Activated naive CD4-positive, alpha-beta T cell treated with anti-CD3 and anti-CD28 coated beads, Interleukin-2, amount 10 ng/mL, durations not matched to agents 7 days and 5 days (primary cell): ENCODE measurements at regions of chr16 and their contacts with region 1.

Region 1: GRCh38 chr16:19601083-19601976 is 45.8 kb downstream of the VPS35L start:
- DNase-seq: peak; percentile 57
- H3K4me3 Mint-ChIP-seq: no peak overlapping the region
- H3K27ac Mint-ChIP-seq: no peak overlapping the region
- H3K4me1 Mint-ChIP-seq: peaks cover 3% of the 10 kb centered on the region
- H3K27me3 Mint-ChIP-seq: no peaks in the 10 kb centered on the region

Region 2: DNA sequence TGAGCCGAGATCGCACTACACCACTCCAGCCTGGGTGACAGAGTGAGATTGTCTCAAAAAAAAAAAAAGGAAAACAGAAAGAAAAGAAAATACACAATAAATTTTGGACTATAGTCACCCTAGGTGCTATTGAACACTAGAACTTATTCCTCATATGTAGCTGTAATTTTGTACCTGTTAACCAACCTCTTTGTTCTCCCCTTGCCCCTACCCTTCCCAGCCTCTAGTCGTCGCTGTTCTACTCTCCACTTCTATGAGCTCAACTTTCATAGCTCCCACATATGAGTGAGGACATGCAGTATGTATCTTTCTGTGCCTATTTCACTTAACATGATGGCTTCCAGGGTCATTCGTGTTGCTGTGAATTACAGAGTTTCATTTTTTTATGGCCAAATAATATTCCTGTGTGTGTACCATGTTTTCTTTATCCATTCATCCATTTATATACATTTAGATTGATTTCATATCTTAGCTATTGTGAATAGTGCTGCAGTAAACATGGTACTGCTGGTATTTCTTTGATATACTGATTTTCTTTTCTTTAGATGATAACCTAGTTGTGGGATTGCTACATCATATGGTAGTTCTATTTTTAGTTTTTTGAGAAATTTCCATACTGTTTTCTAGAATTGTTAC is 17.5 kb before region 1 on chr16:
- CTCF ChIA-PET with region 1: interaction called, 10 read pairs
- DNase-seq: peak; percentile 41
- H3K4me3 Mint-ChIP-seq: no peak overlapping the region
- H3K27ac Mint-ChIP-seq: no peak overlapping the region
- H3K4me1 Mint-ChIP-seq: no peaks in the 10 kb centered on the region
- H3K27me3 Mint-ChIP-seq: no peaks in the 10 kb centered on the region

Region 3: DNA sequence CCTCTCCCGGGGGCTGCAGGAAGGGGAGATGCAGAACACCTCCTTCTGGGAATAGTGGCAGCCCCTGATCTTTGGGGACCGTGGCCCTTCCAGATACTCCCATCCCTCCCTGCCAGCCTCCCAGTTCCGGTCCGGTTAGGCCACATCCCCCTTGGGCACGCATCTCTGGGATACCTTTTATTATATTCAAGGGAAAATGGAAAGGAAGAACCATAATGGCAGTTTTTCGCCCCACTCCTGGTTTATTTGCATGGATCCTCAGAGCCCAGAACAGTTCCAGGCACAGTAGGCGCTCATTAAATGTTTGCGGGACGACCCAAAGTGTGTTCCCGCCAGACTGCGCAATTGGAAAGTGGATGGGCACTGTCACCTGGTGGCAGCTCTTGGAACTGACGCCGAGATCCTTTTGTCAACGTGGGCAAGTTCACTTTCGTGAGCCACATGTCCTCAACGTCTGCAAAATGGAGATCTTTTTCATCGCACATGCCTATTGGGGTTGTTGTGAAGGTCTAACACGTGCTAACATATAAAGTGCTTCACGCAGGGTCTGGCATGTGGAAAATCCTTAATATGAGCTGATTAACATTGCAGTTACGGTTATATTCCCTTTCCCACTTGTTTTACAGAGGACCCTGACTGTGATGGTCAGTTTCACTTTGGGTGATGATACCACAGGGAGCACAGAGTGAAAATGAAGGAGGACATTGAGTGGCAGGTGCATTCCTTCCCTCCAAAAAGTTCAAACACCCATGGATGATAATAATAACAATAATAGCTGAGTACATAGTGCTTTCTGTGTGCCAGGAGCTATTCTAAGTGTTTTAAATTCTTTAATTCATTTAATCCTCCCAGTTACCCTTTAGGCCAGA is 285.0 kb after region 1 on chr16:
- CTCF ChIA-PET with region 1: interaction called, 95 read pairs
- DNase-seq: peak; percentile 88
- H3K4me3 Mint-ChIP-seq: peak overlapping the region; percentile 73
- H3K27ac Mint-ChIP-seq: no peak overlapping the region
- H3K4me1 Mint-ChIP-seq: peaks cover 24% of the 10 kb centered on the region
- H3K27me3 Mint-ChIP-seq: peaks cover 53% of the 10 kb centered on the region